Mammary epithelial cell (primary cell): ENCODE measurements at regions of chr9 and their contacts with region 1.

Region 1: GRCh38 chr9:68949271-68950000 is 64.5 kb downstream of the PRKACG start:
- DNase-seq: peak; percentile 30
- H3K4me3 ChIP-seq: no peak overlapping the region
- H3K27ac ChIP-seq: no peak overlapping the region
- H3K4me1 ChIP-seq: peaks cover 8% of the 10 kb centered on the region
- H3K27me3 ChIP-seq: no peaks in the 10 kb centered on the region
- CTCF ChIP-seq: peak; percentile 9 to 32

Region 2: GRCh38 chr9:68714416-68715180 is 234.8 kb before region 1 on chr9:
- CTCF ChIA-PET with region 1: no interaction called
- dilution Hi-C with region 1: no loop called
- in situ Hi-C with region 1: no loop called
- intact Hi-C with region 1: no loop called
- DNase-seq: no peak
- H3K4me3 ChIP-seq: no peak overlapping the region
- H3K27ac ChIP-seq: no peak overlapping the region
- H3K4me1 ChIP-seq: no peaks in the 10 kb centered on the region
- H3K27me3 ChIP-seq: peaks cover 3% of the 10 kb centered on the region
- CTCF ChIP-seq: no peak

Region 3: DNA sequence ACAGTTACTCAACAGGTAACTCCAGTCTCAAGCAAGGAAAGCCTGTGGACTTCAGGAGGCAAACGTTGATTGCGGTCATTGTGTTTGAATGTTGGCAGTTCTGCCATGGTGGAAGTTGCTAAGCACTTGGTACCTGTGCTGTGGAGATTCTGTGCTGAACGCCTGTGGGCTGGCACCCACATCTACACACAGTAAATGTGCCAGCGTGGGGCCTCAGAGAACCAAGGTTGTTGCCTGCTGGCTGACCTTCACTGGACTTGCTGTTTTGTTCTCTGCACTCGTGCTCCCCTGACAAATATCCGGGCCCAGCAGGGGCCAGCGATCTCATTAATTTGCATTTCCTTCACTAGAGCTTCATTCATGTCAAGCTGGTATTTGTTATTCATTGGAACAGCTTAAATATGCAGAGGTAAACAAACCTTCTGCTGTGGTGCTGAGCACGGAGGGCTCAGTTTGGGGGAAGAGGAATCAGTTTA is 77.4 kb before region 1 on chr9:
- CTCF ChIA-PET with region 1: no interaction called
- dilution Hi-C with region 1: no loop called
- in situ Hi-C with region 1: loop called in 1 of 2 experiments (anchors 25 kb)
- intact Hi-C with region 1: no loop called
- DNase-seq: no peak
- H3K4me3 ChIP-seq: no peak overlapping the region
- H3K27ac ChIP-seq: no peak overlapping the region
- H3K4me1 ChIP-seq: no peaks in the 10 kb centered on the region
- H3K27me3 ChIP-seq: no peaks in the 10 kb centered on the region
- CTCF ChIP-seq: no peak

Region 4: GRCh38 chr9:68999393-69000105 is 50.1 kb after region 1 on chr9:
- CTCF ChIA-PET with region 1: interaction called, 4 read pairs
- dilution Hi-C with region 1: no loop called
- in situ Hi-C with region 1: no loop called
- intact Hi-C with region 1: loop called (anchors 5 kb)
- DNase-seq: peak; percentile 54
- H3K4me3 ChIP-seq: no peak overlapping the region
- H3K27ac ChIP-seq: no peak overlapping the region
- H3K4me1 ChIP-seq: no peaks in the 10 kb centered on the region
- H3K27me3 ChIP-seq: no peaks in the 10 kb centered on the region
- CTCF ChIP-seq: peak; percentile 90 to 97